ENCODE measurements at regions of chr20 and their contacts with region 1.

Region 1: GRCh38 chr20:53216856-53217576 is 244.9 kb downstream of the TSHZ2 start:
- DNase-seq: peak; percentile 83
- H3K4me3 Mint-ChIP-seq: no peak overlapping the region
- H3K27ac Mint-ChIP-seq: peak overlapping the region; percentile 72
- H3K4me1 Mint-ChIP-seq: peaks cover 51% of the 10 kb centered on the region
- H3K27me3 Mint-ChIP-seq: no peaks in the 10 kb centered on the region

Region 2: GRCh38 chr20:53077373-53078205 is 139.4 kb before region 1 on chr20:
- CTCF ChIA-PET with region 1: no interaction called
- POLR2A ChIA-PET with region 1: interaction called, 3 read pairs
- intact Hi-C with region 1: loop called (anchors 5 kb)
- DNase-seq: peak; percentile 51
- H3K4me3 Mint-ChIP-seq: no peak overlapping the region
- H3K27ac Mint-ChIP-seq: no peak overlapping the region
- H3K4me1 Mint-ChIP-seq: peaks cover 47% of the 10 kb centered on the region
- H3K27me3 Mint-ChIP-seq: no peaks in the 10 kb centered on the region

Region 3: GRCh38 chr20:53157443-53158408 is 59.3 kb before region 1 on chr20:
- CTCF ChIA-PET with region 1: interaction called, 5 read pairs
- POLR2A ChIA-PET with region 1: no interaction called
- intact Hi-C with region 1: loop called (anchors 5 kb)
- DNase-seq: peak; percentile 49
- H3K4me3 Mint-ChIP-seq: no peak overlapping the region
- H3K27ac Mint-ChIP-seq: peak overlapping the region; percentile 3
- H3K4me1 Mint-ChIP-seq: peaks cover 51% of the 10 kb centered on the region
- H3K27me3 Mint-ChIP-seq: no peaks in the 10 kb centered on the region

Region 4: DNA sequence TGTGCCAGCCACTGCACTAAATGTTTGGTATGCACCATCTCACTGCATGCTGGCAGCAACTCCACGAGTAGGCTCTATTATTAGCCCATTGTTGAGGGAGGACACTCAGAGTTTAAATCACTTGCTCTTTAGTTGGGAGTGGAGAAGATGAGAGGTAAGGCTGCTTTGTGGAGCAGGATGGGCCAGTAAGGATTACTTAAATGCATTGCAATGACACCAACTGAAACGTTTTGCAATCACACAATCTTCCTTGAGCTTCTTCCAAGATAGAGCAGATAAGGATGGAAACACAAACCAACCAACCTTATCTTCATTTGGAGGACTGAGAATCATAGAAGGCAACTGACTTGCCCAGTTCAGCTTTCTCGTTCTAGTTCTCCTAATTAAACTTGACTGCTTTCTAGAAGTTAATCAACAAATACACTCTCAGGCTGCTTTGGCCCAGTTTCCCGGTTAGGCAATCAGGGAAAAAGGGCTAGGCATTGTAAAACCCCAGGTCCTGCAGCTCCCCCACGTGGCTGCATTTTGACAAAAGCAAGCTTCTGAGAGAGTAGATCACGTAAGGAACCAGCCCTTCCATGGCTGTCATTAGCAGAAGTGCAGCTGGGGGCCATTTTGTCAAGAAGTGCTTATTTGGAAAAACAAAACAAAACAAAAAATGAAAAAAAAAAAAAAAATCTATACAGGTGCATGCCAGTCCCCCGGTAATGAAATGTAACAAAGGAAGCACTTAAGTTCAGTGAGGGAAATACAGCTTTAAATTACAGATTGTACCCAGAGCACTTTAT is 722.8 kb after region 1 on chr20:
- CTCF ChIA-PET with region 1: no interaction called
- POLR2A ChIA-PET with region 1: no interaction called
- intact Hi-C with region 1: loop called (anchors 10 kb)
- DNase-seq: peak; percentile 87
- H3K4me3 Mint-ChIP-seq: no peak overlapping the region
- H3K27ac Mint-ChIP-seq: no peak overlapping the region
- H3K4me1 Mint-ChIP-seq: peaks cover 28% of the 10 kb centered on the region
- H3K27me3 Mint-ChIP-seq: no peaks in the 10 kb centered on the region